ENCODE measurements at regions of chr1 and their contacts with region 1.

Region 1: DNA sequence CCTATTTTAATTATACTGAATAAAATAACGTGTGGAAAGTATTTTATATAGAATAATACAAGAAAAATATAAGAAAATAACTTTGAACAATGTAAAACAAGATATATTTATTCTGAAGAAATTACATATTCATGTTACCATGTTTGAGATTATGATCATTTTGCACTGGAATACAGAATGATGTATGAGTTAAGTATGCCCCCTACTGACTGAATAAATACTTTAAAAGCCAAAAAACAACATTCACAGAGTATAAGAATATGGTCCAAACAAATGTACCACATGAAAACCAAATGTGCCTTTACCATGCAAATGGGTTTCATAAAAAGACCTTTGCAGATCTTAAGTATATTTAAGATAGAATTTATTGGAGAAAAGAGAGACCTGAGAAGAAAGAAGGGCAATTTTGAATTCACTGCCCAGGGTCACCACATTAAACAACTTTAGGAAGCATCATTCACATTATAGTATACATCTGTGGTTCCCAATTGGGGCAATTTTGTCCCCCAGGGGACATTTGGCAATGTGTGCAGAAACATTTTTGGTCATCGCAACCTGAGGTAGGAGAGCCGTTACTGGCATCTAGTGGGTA is 136.6 kb upstream of the GFI1 start:
- DNase-seq: peak in 2 of 9 experiments; percentile 39 to 57
- ATAC-seq: no peak
- H3K4me3 ChIP-seq: no peak overlapping the region
- H3K4me3 Mint-ChIP-seq: no peak overlapping the region
- H3K27ac ChIP-seq: no peak overlapping the region
- H3K27ac Mint-ChIP-seq: no peak overlapping the region
- H3K4me1 ChIP-seq: no peaks in the 10 kb centered on the region
- H3K4me1 Mint-ChIP-seq: no peaks in the 10 kb centered on the region
- H3K27me3 ChIP-seq: no peaks in the 10 kb centered on the region
- H3K27me3 Mint-ChIP-seq: no peaks in the 10 kb centered on the region
- CTCF ChIP-seq: peak; percentile 81

Region 2: GRCh38 chr1:92599184-92599583 is 24.1 kb before region 1 on chr1:
- CTCF ChIA-PET with region 1: no interaction called
- POLR2A ChIA-PET with region 1: no interaction called
- intact Hi-C with region 1: loop called in 1 of 2 experiments (anchors 2 kb)
- DNase-seq: peak in 2 of 9 experiments; percentile 55 to 70
- ATAC-seq: peak; percentile 59
- H3K4me3 ChIP-seq: no peak overlapping the region
- H3K4me3 Mint-ChIP-seq: no peak overlapping the region
- H3K27ac ChIP-seq: no peak overlapping the region
- H3K27ac Mint-ChIP-seq: no peak overlapping the region
- H3K4me1 ChIP-seq: no peaks in the 10 kb centered on the region
- H3K4me1 Mint-ChIP-seq: peaks cover 2% of the 10 kb centered on the region
- H3K27me3 ChIP-seq: no peaks in the 10 kb centered on the region
- H3K27me3 Mint-ChIP-seq: no peaks in the 10 kb centered on the region
- CTCF ChIP-seq: peak; percentile 91

Region 3: DNA sequence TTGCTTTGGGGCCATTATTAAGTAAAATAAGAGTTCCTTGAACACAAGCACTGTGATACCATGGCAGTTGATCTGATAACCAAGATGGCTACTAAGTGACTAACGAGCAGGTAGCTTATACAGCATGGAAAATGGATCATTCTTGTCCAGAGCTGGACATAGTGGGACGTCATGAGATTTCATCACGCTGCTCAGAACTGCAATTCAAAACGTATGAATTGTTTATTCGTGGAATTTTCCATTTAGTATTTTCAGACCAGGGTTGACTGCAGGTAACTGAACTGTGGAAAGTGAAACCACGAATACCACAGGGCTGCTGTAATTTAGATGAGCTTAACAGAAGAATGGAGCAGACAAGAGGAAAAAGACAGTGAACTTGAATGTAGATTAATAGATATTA is 596.2 kb after region 1 on chr1:
- CTCF ChIA-PET with region 1: no interaction called
- POLR2A ChIA-PET with region 1: no interaction called
- intact Hi-C with region 1: no loop called
- DNase-seq: peak in 2 of 9 experiments; percentile 8 to 21
- ATAC-seq: peak; percentile 31
- H3K4me3 ChIP-seq: peak overlapping the region; percentile 2 to 34
- H3K4me3 Mint-ChIP-seq: peak overlapping the region; percentile 76
- H3K27ac ChIP-seq: no peak overlapping the region
- H3K27ac Mint-ChIP-seq: no peak overlapping the region
- H3K4me1 ChIP-seq: no peaks in the 10 kb centered on the region
- H3K4me1 Mint-ChIP-seq: peaks cover 12% of the 10 kb centered on the region
- H3K27me3 ChIP-seq: no peaks in the 10 kb centered on the region
- H3K27me3 Mint-ChIP-seq: no peaks in the 10 kb centered on the region
- CTCF ChIP-seq: no peak